Transverse colon (tissue), 4 donors: ENCODE measurements at regions of chr20 and their contacts with region 1.

Region 1: GRCh38 chr20:35615667-35616464 is at the start of gene SPAG4:
- DNase-seq: peak; percentile 100
- H3K4me3 ChIP-seq: peak within 1 kb of the TSS; percentile 44 to 64 (median 57)
- H3K27ac ChIP-seq: peak within 1 kb of the TSS; percentile 90 to 98 (median 96)
- H3K4me1 ChIP-seq: peaks cover 12 to 47% (median 37%) of the 10 kb centered on the region in 4 donors
- H3K27me3 ChIP-seq: no peaks in the 10 kb centered on the region
- CTCF ChIP-seq: no peak
- EP300 ChIP-seq: peak; percentile 17
- POLR2A ChIP-seq: peak; percentile 86
- total RNA-seq, gene SPAG4: 3.3 to 17.5 TPM in 2 of 4 donors, not detected in the others

Region 2: DNA sequence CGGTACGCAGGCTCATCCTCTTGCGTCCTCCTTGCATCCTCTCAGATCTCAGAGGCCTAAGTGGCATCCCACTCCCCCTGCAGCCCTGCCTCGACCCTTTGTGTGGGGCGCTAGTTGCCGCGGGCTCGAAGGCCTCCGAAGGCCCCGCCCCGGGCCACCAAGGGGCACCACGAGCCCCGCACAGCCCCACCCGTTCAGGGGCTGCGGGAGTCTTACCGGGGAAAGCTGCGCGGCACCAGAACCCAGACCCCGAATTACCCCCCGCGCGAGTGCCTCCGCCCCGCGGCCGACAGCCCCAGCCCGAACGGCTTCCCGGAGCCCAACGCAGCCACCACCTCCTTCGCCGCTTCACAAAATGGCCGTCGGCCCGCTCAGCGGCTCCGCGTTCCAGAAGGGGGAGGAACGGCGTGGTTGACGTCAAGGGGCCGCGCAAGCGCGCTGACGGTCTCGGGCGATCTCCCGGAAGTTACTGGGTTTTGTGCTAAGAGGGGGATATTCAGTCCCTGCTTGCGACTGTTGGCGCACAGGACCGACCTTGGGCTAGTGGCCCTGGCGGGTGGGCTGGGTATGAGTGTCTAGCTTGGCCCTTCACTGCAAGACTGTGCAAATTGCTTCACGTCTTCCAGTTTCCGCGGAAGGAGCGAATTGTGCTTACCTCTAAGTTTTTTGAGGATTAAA is 48.8 kb after region 1 on chr20 and contains the starts of genes CPNE1 and RBM12:
- in situ Hi-C with region 1: no loop called
- intact Hi-C with region 1: loop called (anchors 2 kb)
- DNase-seq: peak; percentile 94
- H3K4me3 ChIP-seq: peak within 1 kb of the TSS; percentile 57 to 87 (median 64)
- H3K27ac ChIP-seq: peak within 1 kb of the TSS; percentile 94 to 98 (median 96)
- H3K4me1 ChIP-seq: peaks cover 15 to 40% (median 38%) of the 10 kb centered on the region in 4 donors
- H3K27me3 ChIP-seq: no peaks in the 10 kb centered on the region
- CTCF ChIP-seq: peak in 2 of 5 experiments; percentile 7 to 10
- EP300 ChIP-seq: no peak
- POLR2A ChIP-seq: peak; percentile 94
- total RNA-seq, gene CPNE1: 67.7 to 225 (median 132) TPM
- total RNA-seq, gene RBM12: 24.7 to 33.8 (median 29.3) TPM

Region 3: GRCh38 chr20:36035745-36036144 is 419.9 kb after region 1 on chr20:
- in situ Hi-C with region 1: no loop called
- intact Hi-C with region 1: no loop called
- DNase-seq: no peak
- H3K4me3 ChIP-seq: no peak overlapping the region
- H3K27ac ChIP-seq: no peak overlapping the region
- H3K4me1 ChIP-seq: no peaks in the 10 kb centered on the region
- H3K27me3 ChIP-seq: no peaks in the 10 kb centered on the region
- CTCF ChIP-seq: no peak
- EP300 ChIP-seq: no peak
- POLR2A ChIP-seq: no peak